ENCODE measurements at regions of chr1 and their contacts with region 1.

Region 1: GRCh38 chr1:232950197-232951176 is at the start of gene NTPCR:
- DNase-seq: peak; percentile 94 to 97
- ATAC-seq: peak; percentile 94 to 98 (median 98)
- H3K4me3 ChIP-seq: peak within 1 kb of the TSS; percentile 77 to 98 (median 86)
- H3K27ac ChIP-seq: peak within 1 kb of the TSS; percentile 40 to 93 (median 89)
- H3K4me1 ChIP-seq: peaks cover 0 to 34% (median 20%) of the 10 kb centered on the region in 9 donors
- H3K27me3 ChIP-seq: no peaks in the 10 kb centered on the region
- CTCF ChIP-seq: peak in 5 of 9 donors; percentile 5 to 45 (median 39)
- total RNA-seq, gene NTPCR: 53.5 to 78.8 (median 56.8) TPM

Region 2: DNA sequence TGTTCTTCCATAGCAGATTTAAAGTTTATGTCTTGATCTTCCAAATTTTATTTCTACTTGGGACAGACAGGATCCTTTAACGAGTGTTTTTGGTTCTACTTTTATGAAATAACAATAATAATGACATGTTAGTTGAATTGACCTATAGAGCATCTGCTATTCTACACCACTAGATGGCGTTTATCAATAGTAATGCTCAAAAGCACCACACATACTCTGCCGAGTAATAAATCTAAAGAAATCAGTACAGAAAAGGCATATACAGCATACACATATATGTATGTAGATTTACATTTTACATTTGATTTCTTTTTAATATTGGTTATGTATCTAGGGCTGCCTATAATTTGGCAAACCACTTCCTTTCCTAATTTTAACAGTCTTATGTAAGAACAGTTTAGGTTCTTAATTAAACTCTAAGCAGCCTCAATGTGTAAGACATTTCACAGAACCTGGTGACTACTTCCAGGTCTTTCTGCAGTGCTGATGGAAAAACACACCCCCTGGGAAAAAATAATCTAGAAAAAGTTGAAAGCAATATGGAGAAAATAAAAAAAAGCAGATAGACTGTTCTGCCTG is 314.6 kb before region 1 on chr1:
- intact Hi-C with region 1: loop called in 9 of 10 experiments (anchors 5 to 10 kb)
- DNase-seq: no peak
- ATAC-seq: peak in 6 of 8 donors; percentile 53 to 79 (median 70)
- H3K4me3 ChIP-seq: no peak overlapping the region
- H3K27ac ChIP-seq: no peak overlapping the region
- H3K4me1 ChIP-seq: peaks cover 0 to 10% (median 3%) of the 10 kb centered on the region in 9 donors
- H3K27me3 ChIP-seq: no peaks in the 10 kb centered on the region
- CTCF ChIP-seq: peak; percentile 50 to 89 (median 85)

Region 3: DNA sequence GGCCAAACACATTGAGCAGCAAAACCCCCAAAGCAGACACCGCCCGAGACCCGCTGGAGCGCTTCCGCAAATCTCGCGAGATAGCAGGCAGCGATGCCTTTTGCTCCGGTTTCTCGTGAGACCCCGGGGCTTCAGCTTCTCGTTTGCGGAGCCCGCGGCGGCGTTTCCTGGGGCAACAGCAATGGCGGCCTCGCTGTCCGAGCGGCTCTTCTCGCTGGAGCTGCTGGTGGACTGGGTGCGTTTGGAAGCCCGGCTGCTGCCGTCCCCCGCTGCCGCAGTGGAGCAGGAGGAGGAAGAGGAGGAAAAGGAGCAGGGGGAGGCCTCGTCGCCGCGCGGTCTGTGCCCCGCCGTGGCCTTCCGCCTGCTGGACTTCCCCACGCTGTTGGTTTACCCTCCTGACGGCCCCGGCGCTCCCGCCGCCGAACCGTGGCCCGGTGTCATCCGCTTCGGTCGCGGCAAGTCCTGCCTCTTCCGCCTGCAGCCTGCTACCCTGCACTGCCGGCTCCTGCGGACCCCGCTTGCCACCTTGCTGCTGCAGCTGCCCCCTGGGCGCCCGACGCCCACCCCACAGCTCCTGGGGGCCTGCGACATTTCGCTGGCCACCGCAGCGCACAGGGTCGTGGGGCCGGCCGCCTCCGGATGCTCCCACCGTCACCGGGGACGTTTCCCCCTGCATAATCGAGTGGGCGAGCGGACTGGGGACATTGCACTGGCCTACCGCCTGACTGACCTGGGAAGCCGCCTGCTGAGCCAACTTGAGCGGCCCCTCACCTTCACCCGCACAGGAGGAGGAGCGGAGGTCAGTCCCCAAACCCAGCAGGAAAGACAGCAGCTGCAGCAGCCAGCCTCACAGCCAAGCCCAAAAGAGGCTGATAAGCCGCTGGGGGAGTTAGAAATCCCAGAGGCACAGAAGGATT is 145.0 kb before region 1 on chr1 and contains the start of gene MAP10:
- intact Hi-C with region 1: loop called in 5 of 10 experiments (anchors 5 to 10 kb)
- DNase-seq: peak; percentile 79 to 83
- ATAC-seq: peak; percentile 86 to 93 (median 90)
- H3K4me3 ChIP-seq: peak within 1 kb of the TSS; percentile 69 to 87 (median 78)
- H3K27ac ChIP-seq: peak within 1 kb of the TSS; percentile 81 to 98 (median 94)
- H3K4me1 ChIP-seq: peaks cover 0 to 57% (median 51%) of the 10 kb centered on the region in 9 donors
- H3K27me3 ChIP-seq: no peaks in the 10 kb centered on the region
- CTCF ChIP-seq: no peak
- total RNA-seq, gene MAP10: 2.5 to 4.8 (median 3.9) TPM

Region 4: DNA sequence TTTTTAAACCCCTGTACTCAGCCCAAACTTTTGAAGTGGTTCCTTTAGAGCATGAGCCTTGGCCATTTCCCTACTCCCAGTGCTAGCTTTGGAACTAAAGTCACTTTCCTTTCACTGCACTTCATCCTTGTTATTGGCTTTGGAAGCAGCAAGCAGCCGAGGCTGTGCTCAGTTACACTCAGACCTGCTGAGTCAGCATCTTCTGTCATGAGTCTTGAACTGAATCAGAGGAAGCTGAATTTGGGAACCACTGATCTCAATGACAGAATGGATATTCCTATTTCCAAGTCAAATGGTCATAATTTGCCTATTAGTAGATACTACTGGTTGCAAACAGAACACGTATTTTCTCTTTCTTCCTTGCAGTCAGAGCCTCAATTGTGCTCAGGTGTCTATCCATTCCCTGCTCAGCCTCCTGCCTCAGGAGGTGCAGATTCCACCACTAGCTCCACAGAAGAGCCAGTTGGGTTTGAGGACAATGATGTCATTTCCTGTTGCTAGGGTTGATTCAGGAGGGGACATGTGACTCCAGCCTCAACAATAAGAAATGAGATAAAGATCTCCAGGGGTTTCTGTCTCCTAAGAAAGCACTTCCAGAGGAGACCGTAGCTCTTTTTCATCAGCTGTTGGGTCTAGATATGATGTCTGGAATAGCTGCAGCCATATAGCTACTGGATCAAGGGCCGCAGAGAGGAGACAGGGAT is 45.0 kb before region 1 on chr1:
- intact Hi-C with region 1: loop called in 1 of 10 experiments (anchors 5 kb)
- DNase-seq: peak in 1 of 2 donors; percentile 8
- ATAC-seq: peak in 4 of 8 donors; percentile 50 to 78 (median 58)
- H3K4me3 ChIP-seq: no peak overlapping the region
- H3K27ac ChIP-seq: peak overlapping the region in 3 of 10 donors; percentile 9 to 23 (median 10)
- H3K4me1 ChIP-seq: peaks cover 0 to 26% (median 13%) of the 10 kb centered on the region in 9 donors
- H3K27me3 ChIP-seq: no peaks in the 10 kb centered on the region
- CTCF ChIP-seq: no peak

Region 5: DNA sequence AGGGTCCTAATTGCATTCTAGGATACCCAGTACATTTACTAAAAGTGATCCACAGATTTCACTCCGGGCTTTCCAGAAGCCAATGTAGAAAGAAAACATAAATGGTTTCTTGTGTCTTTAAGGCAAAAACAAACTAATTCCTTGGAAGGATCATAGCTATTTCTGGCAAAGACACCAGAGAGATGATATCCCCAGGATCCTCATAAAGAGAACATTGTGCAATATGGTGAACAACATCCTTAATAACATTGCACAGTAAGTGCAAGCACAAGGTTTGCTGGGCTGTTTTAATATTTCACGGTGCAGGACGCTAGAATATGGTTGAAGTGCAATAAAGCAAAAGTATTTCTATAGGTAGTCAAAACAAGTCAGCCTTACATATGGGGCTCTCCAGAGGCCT is 82.9 kb after region 1 on chr1:
- intact Hi-C with region 1: no loop called
- DNase-seq: no peak
- ATAC-seq: no peak
- H3K4me3 ChIP-seq: no peak overlapping the region
- H3K27ac ChIP-seq: no peak overlapping the region
- H3K4me1 ChIP-seq: peaks cover 0 to 8% (median 0%) of the 10 kb centered on the region in 9 donors
- H3K27me3 ChIP-seq: no peaks in the 10 kb centered on the region
- CTCF ChIP-seq: no peak

Region 6: GRCh38 chr1:233331676-233332519 is 381.4 kb after region 1 on chr1:
- intact Hi-C with region 1: no loop called
- DNase-seq: no peak
- ATAC-seq: no peak
- H3K4me3 ChIP-seq: no peak overlapping the region
- H3K27ac ChIP-seq: no peak overlapping the region
- H3K4me1 ChIP-seq: peaks cover 3 to 16% (median 9%) of the 10 kb centered on the region in 9 donors
- H3K27me3 ChIP-seq: peaks cover 8 to 70% (median 39%) of the 10 kb centered on the region in 7 donors
- CTCF ChIP-seq: no peak